Mammary epithelial cell (primary cell): ENCODE measurements at regions of chr3 and their contacts with region 1.

Region 1: GRCh38 chr3:153284282-153284938 is 122.4 kb downstream of the RAP2B start:
- DNase-seq: peak; percentile 81
- H3K4me3 ChIP-seq: no peak overlapping the region
- H3K27ac ChIP-seq: peak overlapping the region; percentile 97
- H3K4me1 ChIP-seq: peaks cover 42% of the 10 kb centered on the region
- H3K27me3 ChIP-seq: no peaks in the 10 kb centered on the region
- CTCF ChIP-seq: no peak

Region 2: DNA sequence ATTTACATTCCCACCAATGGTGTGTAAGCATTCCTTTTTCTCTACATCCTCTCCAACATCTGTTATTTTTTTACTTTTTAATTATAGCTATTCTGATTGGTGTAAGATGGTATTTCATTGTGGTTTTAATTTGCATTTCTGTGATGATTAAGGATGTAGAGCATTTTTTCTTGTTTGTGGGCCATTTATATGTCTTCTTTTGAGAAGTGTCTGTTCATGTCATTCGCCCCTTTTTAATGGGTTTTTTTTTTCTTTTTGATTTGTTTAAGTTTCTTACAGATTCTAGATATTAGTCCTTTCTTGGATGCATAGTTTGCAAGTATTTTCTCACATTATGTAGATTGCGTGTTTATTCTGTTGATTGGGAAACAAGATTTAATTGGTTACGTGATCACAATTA is 108.2 kb before region 1 on chr3:
- CTCF ChIA-PET with region 1: no interaction called
- dilution Hi-C with region 1: no loop called
- in situ Hi-C with region 1: no loop called
- intact Hi-C with region 1: no loop called
- DNase-seq: no peak
- H3K4me3 ChIP-seq: no peak overlapping the region
- H3K27ac ChIP-seq: no peak overlapping the region
- H3K4me1 ChIP-seq: peaks cover 9% of the 10 kb centered on the region
- H3K27me3 ChIP-seq: no peaks in the 10 kb centered on the region
- CTCF ChIP-seq: no peak

Region 3: GRCh38 chr3:153209596-153209995 is 74.8 kb before region 1 on chr3:
- CTCF ChIA-PET with region 1: no interaction called
- dilution Hi-C with region 1: loop called (anchors 5 kb)
- in situ Hi-C with region 1: no loop called
- intact Hi-C with region 1: loop called (anchors 1 kb)
- DNase-seq: peak; percentile 75
- H3K4me3 ChIP-seq: no peak overlapping the region
- H3K27ac ChIP-seq: peak overlapping the region; percentile 14
- H3K4me1 ChIP-seq: peaks cover 24% of the 10 kb centered on the region
- H3K27me3 ChIP-seq: no peaks in the 10 kb centered on the region
- CTCF ChIP-seq: no peak